Esophagus muscularis mucosa (tissue), 4 donors: ENCODE measurements at regions of chr6 and their contacts with region 1.

Region 1: DNA sequence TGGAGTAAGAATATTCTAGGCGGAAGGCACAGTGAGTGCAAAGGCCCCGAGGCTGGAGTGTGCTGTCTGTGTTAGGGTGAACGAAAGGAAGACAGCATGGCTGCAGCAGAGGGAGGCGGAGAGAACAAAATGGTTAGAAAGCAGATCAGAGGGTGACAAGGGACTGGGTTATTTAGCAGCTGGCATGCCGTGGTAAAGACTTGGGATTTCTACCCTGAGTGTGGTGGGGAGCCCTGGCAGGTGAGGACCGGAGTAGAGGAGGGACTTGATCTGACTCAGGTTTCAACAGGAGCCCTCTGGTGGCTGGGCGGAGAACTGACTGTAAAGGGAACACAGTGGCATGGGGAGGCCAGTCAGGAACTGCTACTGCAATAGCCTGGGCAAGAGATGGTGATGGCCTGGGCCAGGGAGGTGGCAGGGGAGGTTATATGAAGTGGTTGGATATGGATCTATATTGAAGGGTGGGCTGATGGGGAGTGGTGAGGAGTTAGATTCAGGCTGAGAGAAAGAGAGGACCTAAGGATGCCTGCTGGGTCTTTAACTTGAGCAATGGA is 38.0 kb downstream of the PIM1 start:
- DNase-seq: peak; percentile 97
- H3K4me3 ChIP-seq: no peak overlapping the region
- H3K27ac ChIP-seq: no peak overlapping the region
- H3K4me1 ChIP-seq: peaks cover 0 to 12% (median 7%) of the 10 kb centered on the region in 4 donors
- H3K27me3 ChIP-seq: no peaks in the 10 kb centered on the region
- CTCF ChIP-seq: peak; percentile 63 to 85 (median 78)
- EP300 ChIP-seq: no peak
- POLR2A ChIP-seq: no peak

Region 2: GRCh38 chr6:36765594-36766398 is 442.2 kb before region 1 on chr6:
- intact Hi-C with region 1: loop called (anchors 10 kb)
- DNase-seq: no peak
- H3K4me3 ChIP-seq: no peak overlapping the region
- H3K27ac ChIP-seq: no peak overlapping the region
- H3K4me1 ChIP-seq: peaks cover 21 to 42% (median 38%) of the 10 kb centered on the region in 4 donors
- H3K27me3 ChIP-seq: no peaks in the 10 kb centered on the region
- CTCF ChIP-seq: peak; percentile 79 to 94 (median 93)
- EP300 ChIP-seq: no peak
- POLR2A ChIP-seq: no peak

Region 3: GRCh38 chr6:36885461-36886401 is 322.2 kb before region 1 on chr6 and contains the start of gene C6orf89:
- intact Hi-C with region 1: loop called (anchors 10 kb)
- DNase-seq: peak; percentile 99
- H3K4me3 ChIP-seq: peak within 1 kb of the TSS; percentile 71 to 88 (median 82)
- H3K27ac ChIP-seq: peak within 1 kb of the TSS; percentile 86 to 89 (median 88)
- H3K4me1 ChIP-seq: peaks cover 18 to 40% (median 36%) of the 10 kb centered on the region in 4 donors
- H3K27me3 ChIP-seq: no peaks in the 10 kb centered on the region
- CTCF ChIP-seq: peak; percentile 88 to 97 (median 90)
- EP300 ChIP-seq: no peak
- POLR2A ChIP-seq: peak; percentile 78
- total RNA-seq, gene C6orf89: 56.5 to 66.2 (median 59.0) TPM

Region 4: GRCh38 chr6:37018198-37019064 is 189.5 kb before region 1 on chr6:
- intact Hi-C with region 1: loop called (anchors 2 kb)
- DNase-seq: peak; percentile 96
- H3K4me3 ChIP-seq: no peak overlapping the region
- H3K27ac ChIP-seq: peak overlapping the region; percentile 61 to 73 (median 69)
- H3K4me1 ChIP-seq: peaks cover 13 to 27% (median 23%) of the 10 kb centered on the region in 4 donors
- H3K27me3 ChIP-seq: no peaks in the 10 kb centered on the region
- CTCF ChIP-seq: peak; percentile 86 to 97 (median 90)
- EP300 ChIP-seq: no peak
- POLR2A ChIP-seq: no peak

Region 5: DNA sequence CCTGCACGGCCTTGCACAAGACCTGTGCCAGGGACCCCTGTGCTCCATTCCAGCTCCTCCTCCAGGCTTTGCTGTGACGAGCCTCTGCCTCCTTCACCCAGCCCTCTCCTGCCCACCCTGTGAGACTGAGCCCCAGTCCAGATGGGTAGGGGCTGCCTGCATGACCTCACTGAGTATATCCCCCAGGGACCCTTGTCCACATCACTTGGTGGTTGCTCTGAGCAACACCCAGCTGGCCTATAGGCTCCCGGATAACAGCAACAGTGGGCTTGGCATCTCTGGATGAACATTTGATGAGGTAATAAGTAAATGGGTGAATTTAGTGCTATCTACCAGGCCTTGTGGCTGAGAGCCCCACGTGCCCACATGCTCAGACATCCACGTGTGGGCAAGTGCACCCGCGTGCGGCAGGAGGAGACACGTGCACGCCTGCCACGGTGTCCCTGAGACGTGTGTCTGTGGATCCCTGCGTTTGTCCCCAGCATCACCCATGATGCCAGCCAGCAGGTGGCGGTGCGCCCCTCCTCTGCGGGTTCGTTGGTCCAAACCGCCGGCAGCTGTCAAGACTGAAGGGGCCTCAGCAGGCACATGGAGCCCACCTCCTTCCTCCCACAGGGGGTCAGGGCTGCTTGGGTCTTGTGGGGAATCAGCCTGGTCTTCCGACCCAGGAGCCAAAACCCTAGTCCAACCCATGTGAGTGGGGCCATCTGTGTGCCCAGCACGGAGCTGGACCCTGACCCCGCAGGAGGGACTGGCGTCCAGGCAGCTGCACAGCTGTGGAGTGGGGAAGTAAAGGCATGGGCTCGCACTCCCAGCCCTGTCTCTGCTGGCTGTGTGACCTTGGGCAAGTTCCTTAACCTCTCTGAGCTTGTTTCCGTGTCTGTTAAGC is 156.6 kb before region 1 on chr6:
- intact Hi-C with region 1: loop called (anchors 1 kb)
- DNase-seq: peak; percentile 96
- H3K4me3 ChIP-seq: no peak overlapping the region
- H3K27ac ChIP-seq: peak overlapping the region in 2 of 4 donors; percentile 54 to 62
- H3K4me1 ChIP-seq: peaks cover 17 to 31% (median 22%) of the 10 kb centered on the region in 4 donors
- H3K27me3 ChIP-seq: no peaks in the 10 kb centered on the region
- CTCF ChIP-seq: peak; percentile 90 to 92 (median 91)
- EP300 ChIP-seq: no peak
- POLR2A ChIP-seq: no peak

Region 6: DNA sequence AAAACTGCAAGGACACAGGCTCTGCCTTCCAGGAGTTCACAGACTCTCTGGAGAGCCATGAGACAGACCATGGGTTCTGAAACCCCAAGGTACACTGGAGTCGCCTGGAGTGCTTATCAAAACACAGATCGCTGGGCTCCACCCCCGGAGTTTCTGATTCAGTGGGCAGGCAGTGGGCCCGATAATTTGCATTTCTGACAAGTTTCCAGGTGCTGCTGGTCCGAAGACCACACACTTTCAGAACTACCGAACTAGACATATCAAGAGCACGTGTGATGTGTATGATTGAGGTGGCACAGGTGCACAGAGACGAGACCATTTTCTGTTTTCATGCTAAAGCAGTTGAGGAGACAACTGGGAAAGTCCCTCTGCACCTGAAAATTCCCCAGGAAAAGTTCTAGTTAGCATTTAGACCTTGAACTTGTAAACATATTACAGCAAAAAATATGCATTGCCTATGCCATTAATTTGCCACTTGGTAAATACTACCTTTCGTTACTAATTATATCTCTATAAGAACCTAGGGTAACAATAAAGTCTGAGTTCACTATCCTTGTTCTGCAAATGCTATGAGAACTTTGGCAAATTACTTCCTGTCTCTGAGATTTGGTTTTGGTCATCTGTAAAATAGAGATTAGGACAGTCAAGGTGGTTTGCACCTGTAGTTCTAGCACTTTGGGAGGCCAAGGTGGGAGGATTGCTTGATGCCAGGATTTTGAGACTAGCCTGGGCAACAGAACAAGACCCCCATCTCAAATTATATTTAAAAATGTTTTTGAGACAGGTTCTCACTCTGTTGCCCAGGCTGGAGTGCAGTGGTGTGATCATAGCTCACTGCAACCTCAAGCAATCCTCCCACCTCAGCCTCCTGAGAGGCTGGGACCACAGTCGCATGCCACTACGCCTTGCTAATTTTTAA is 52.3 kb before region 1 on chr6:
- intact Hi-C with region 1: no loop called
- DNase-seq: no peak
- H3K4me3 ChIP-seq: no peak overlapping the region
- H3K27ac ChIP-seq: no peak overlapping the region
- H3K4me1 ChIP-seq: peaks cover under 1 to 3% (median 2%) of the 10 kb centered on the region in 4 donors
- H3K27me3 ChIP-seq: no peaks in the 10 kb centered on the region
- CTCF ChIP-seq: no peak
- EP300 ChIP-seq: no peak
- POLR2A ChIP-seq: no peak

Region 7: GRCh38 chr6:37175332-37176267 is 32.4 kb before region 1 on chr6:
- intact Hi-C with region 1: loop called (anchors 2 kb)
- DNase-seq: no peak
- H3K4me3 ChIP-seq: peak overlapping the region in 1 of 4 donors; percentile 96
- H3K27ac ChIP-seq: peak overlapping the region in 3 of 4 donors; percentile 18 to 96 (median 25)
- H3K4me1 ChIP-seq: peaks cover 17 to 43% (median 40%) of the 10 kb centered on the region in 4 donors
- H3K27me3 ChIP-seq: peaks cover 0 to 4% (median 0%) of the 10 kb centered on the region in 4 donors
- CTCF ChIP-seq: no peak
- EP300 ChIP-seq: no peak
- POLR2A ChIP-seq: no peak